Heart left ventricle (tissue), 16 donors: ENCODE measurements at regions of chr10 and their contacts with region 1.

Region 1: DNA sequence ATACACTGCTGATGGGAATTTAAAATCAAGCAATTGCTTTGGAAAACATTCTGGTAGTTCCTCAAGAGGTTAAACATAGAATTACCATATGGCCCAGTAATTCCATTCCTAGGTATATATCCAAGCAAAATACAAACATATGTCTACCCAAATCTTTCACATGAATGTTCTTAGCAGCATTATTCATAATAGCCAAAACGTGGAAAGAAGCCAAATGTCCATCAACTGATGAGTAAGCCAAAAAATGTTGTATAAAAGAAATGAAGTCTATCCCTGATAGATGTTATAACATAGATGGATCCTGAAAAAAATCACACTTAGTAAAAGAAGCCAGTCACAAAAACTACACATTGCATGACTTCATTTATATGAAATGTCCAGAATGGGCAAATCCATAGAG is 893.0 kb downstream of the SORCS3 start:
- DNase-seq: no peak
- ATAC-seq: no peak
- H3K4me3 ChIP-seq: no peak overlapping the region
- H3K27ac ChIP-seq: no peak overlapping the region
- H3K4me1 ChIP-seq: no peaks in the 10 kb centered on the region
- H3K27me3 ChIP-seq: no peaks in the 10 kb centered on the region
- CTCF ChIP-seq: no peak
- POLR2A ChIP-seq: no peak

Region 2: DNA sequence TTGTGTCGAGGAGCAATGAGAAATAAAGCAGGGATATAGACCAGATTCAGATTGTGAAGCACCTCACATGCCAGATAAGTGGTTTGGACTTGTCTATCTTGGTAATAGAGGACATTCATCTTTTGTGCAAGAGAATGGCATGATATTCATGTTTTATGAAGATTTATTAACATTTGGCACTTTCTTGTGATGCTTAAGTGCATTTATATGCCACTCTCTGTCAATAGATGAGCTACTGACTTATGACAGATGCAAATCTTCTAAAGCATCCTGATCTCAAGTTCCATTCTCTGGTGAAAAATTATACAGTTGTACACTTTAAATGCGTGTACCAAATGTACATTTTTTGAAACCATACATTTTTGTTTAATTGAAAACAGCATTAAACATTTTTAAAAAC is 477.7 kb before region 1 on chr10:
- intact Hi-C with region 1: loop called in 1 of 10 experiments (anchors 10 kb)
- DNase-seq: no peak
- ATAC-seq: no peak
- H3K4me3 ChIP-seq: no peak overlapping the region
- H3K27ac ChIP-seq: no peak overlapping the region
- H3K4me1 ChIP-seq: no peaks in the 10 kb centered on the region
- H3K27me3 ChIP-seq: peaks cover 0 to 4% (median 0%) of the 10 kb centered on the region in 9 donors
- CTCF ChIP-seq: no peak
- POLR2A ChIP-seq: no peak

Region 3: DNA sequence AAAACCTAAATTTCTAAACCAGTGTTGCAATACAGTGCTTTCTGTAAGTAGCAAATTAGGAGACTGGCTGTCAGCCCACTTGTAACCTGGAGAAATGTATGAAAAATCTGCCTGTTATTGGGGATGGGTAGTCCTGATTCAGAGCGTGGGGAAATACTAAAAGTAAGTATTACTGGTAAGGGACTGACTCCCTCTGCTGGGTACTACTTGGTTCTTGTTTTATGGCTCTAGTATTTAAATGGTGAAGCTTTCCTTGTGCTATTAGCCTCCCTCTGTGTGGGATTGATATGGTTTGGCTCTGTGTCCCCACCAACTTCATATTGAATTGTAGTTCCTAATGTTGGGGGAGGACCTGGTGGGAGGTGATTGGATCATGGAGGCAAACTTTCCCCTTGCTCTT is 744.3 kb after region 1 on chr10:
- intact Hi-C with region 1: no loop called
- DNase-seq: no peak
- ATAC-seq: peak in 1 of 4 donors; percentile 32
- H3K4me3 ChIP-seq: no peak overlapping the region
- H3K27ac ChIP-seq: no peak overlapping the region
- H3K4me1 ChIP-seq: no peaks in the 10 kb centered on the region
- H3K27me3 ChIP-seq: no peaks in the 10 kb centered on the region
- CTCF ChIP-seq: peak in 2 of 12 donors; percentile 12 to 23
- POLR2A ChIP-seq: no peak